ENCODE measurements at regions of chr3 and their contacts with region 1.

Region 1: GRCh38 chr3:153221748-153222162 is 59.7 kb downstream of the RAP2B start:
- DNase-seq: peak; percentile 81
- H3K4me3 Mint-ChIP-seq: peak overlapping the region; percentile 72
- H3K27ac Mint-ChIP-seq: peak overlapping the region; percentile 90
- H3K4me1 Mint-ChIP-seq: peaks cover 54% of the 10 kb centered on the region
- H3K27me3 Mint-ChIP-seq: no peaks in the 10 kb centered on the region

Region 2: DNA sequence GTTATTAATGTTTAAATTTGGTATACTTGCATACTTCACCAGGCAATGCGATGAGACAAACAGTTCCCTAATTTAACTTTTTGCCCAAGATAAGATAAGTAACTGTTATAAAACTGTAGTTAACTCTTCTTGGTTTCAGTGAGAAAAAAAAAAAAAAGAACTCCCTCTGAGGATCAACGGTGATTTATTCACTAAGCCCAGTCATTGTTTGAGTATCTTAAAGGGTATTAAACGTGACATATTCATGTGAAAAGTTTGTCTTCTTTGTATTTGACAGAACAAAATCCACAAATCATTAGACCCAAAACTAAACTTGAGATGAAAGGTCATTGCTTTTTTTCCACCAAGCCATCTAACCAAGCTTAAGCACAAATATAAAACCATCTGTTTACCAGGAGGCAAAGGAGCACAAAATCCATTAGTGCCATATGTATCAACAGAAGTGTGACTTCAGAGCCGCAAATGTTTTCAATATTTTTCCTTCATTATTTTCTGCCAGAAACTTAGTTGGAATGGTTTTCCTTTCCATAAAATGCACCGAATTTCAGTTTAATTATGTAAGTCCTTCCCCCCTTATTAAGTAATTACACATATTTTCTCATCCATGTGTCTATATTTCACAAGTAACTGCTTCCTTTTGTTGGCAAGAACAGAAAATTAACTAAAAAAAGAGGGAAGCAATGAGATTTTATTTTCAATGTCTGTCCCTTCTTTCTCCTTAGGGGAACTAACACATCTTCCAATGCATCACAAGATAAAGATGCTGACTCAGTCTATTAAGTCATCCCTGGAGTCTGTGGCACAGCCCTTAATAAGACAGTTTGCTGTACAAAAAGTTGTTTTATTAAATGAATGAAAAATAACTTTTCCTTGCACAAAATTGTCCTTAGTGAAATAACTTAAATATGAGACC is 151.9 kb before region 1 on chr3:
- CTCF ChIA-PET with region 1: no interaction called
- POLR2A ChIA-PET with region 1: no interaction called
- intact Hi-C with region 1: no loop called
- DNase-seq: no peak
- H3K4me3 Mint-ChIP-seq: no peak overlapping the region
- H3K27ac Mint-ChIP-seq: no peak overlapping the region
- H3K4me1 Mint-ChIP-seq: no peaks in the 10 kb centered on the region
- H3K27me3 Mint-ChIP-seq: no peaks in the 10 kb centered on the region

Region 3: GRCh38 chr3:153244961-153245360 is 23.2 kb after region 1 on chr3:
- CTCF ChIA-PET with region 1: no interaction called
- POLR2A ChIA-PET with region 1: no interaction called
- intact Hi-C with region 1: loop called (anchors 2 kb)
- DNase-seq: no peak
- H3K4me3 Mint-ChIP-seq: no peak overlapping the region
- H3K27ac Mint-ChIP-seq: no peak overlapping the region
- H3K4me1 Mint-ChIP-seq: peaks cover 15% of the 10 kb centered on the region
- H3K27me3 Mint-ChIP-seq: no peaks in the 10 kb centered on the region

Region 4: DNA sequence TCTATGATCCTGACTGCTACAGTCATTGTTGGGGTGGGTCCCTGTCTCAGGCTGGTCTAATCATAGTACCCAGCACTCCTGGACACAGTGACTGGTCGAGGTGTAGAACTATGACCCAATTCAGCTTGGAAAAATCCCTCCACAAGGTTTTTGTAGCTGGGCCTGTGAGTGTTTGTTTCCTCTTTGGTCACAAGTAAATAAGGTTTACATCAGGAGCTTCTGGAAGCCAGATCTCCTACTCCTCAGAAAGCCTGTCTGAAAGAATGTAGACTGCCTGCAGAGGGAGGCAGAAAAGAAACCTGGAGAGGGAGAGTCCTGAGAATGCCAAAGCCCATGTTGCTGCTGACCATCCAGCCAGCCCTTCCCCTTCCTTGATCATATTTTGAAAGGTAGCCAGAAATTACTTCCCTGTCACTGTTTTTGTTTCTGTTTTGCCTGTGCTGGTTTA is 63.5 kb after region 1 on chr3:
- CTCF ChIA-PET with region 1: interaction called, 6 read pairs
- POLR2A ChIA-PET with region 1: interaction called, 5 read pairs
- intact Hi-C with region 1: loop called (anchors 1 kb)
- DNase-seq: no peak
- H3K4me3 Mint-ChIP-seq: no peak overlapping the region
- H3K27ac Mint-ChIP-seq: peak overlapping the region; percentile 60
- H3K4me1 Mint-ChIP-seq: peaks cover 48% of the 10 kb centered on the region
- H3K27me3 Mint-ChIP-seq: no peaks in the 10 kb centered on the region

Region 5: DNA sequence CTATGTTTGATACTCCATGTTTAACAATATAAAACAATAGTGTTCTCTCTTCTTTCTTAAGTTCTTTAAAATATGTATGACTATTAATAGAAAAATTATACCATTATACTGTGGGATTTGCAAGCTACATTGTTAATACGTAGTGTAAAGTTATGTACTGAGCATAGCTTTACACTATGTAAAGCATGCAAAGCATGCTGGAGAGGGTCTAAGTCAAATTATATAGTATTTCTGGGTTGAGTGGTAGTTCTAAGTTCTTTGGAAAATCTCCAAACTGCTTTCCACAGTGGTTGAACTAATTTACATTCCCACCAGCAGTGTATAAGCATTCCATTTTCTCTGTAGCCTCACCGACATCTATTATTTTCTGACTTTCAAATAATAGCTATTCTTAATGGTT is 193.2 kb after region 1 on chr3:
- CTCF ChIA-PET with region 1: no interaction called
- POLR2A ChIA-PET with region 1: no interaction called
- intact Hi-C with region 1: no loop called
- DNase-seq: no peak
- H3K4me3 Mint-ChIP-seq: no peak overlapping the region
- H3K27ac Mint-ChIP-seq: no peak overlapping the region
- H3K4me1 Mint-ChIP-seq: peaks cover 9% of the 10 kb centered on the region
- H3K27me3 Mint-ChIP-seq: no peaks in the 10 kb centered on the region